ENCODE measurements at regions of chr20 and their contacts with region 1.

Region 1: GRCh38 chr20:49132995-49133478 is 55.1 kb downstream of the STAU1 start:
- DNase-seq: peak in 1 of 2 donors; percentile 58
- ATAC-seq: peak; percentile 53 to 81 (median 70)
- H3K4me3 ChIP-seq: no peak overlapping the region
- H3K27ac ChIP-seq: peak overlapping the region in 1 of 10 donors; percentile 0
- H3K4me1 ChIP-seq: peaks cover 0 to 10% (median 0%) of the 10 kb centered on the region in 9 donors
- H3K27me3 ChIP-seq: no peaks in the 10 kb centered on the region
- CTCF ChIP-seq: peak; percentile 30 to 75 (median 62)

Region 2: DNA sequence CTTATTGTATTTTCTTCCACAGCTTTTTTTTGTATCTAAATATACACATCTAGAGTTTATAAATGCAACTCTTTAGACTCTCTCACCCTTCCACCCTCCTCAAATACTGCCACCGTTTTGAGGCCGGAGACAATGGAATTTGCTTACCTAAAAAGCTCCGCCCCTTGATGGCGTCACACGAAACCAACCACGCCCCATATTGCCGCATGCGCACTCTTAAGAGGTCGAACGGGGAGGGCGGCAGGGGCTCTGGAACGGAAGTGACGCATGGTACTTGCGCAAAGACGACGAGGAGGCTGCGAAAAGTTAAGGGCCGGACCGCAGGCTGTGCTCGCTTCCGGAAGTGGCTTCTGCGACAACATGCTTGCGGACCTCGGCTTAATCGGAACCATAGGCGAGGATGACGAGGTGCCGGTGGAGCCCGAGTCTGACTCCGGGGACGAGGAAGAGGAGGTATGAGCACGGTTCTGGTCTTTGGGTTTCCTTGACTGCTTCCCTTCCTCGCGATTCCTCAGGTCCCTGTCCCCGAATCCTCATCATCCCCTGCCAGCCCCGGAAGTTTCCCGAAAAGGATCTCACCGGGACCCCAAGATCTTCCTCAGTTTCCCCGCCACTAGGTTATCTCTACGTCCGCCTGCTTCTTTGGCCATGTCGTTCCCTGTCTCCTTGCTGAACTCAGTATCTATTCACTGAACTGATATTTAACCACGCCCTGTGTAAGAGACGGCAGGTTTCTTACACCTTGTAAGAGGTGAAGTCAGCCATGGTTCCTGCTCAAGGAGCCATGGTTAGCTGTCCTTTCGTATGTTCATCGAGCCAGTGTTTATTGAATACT is 86.3 kb after region 1 on chr20 and contains the start of gene DDX27:
- intact Hi-C with region 1: loop called (anchors 1 to 5 kb)
- DNase-seq: peak; percentile 95 to 97
- ATAC-seq: peak; percentile 96 to 99 (median 98)
- H3K4me3 ChIP-seq: peak within 1 kb of the TSS; percentile 60 to 92 (median 72)
- H3K27ac ChIP-seq: peak within 1 kb of the TSS; percentile 76 to 95 (median 86)
- H3K4me1 ChIP-seq: peaks cover 2 to 26% (median 12%) of the 10 kb centered on the region in 9 donors
- H3K27me3 ChIP-seq: no peaks in the 10 kb centered on the region
- CTCF ChIP-seq: no peak
- total RNA-seq, gene DDX27: 11.0 to 16.5 (median 12.8) TPM

Measured in heart right ventricle (tissue), 16 donors.